Heart left ventricle (tissue), 16 donors: ENCODE measurements at regions of chr18 and their contacts with region 1.

Region 1: DNA sequence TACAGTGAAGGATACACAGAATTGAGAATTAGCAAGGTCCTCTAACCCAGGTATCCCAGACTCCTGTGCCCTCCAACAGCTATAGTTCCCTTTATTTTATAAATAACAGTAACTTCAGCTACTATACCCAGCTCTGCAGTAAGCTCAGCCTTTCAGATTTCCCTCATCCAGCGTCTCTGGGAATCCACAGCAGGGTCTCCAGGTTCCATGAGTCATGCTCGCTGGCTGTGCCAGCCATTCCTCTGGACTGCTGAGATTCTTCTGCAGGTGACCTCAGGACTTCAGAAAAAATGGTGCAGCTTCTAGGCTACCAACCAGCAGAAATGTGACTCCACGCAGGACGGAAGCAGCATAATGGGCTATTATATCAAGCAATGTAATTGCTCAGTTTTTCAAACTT is 419.3 kb downstream of the ZNF516 start:
- DNase-seq: no peak
- ATAC-seq: no peak
- H3K4me3 ChIP-seq: no peak overlapping the region
- H3K27ac ChIP-seq: no peak overlapping the region
- H3K4me1 ChIP-seq: no peaks in the 10 kb centered on the region
- H3K27me3 ChIP-seq: peaks cover 0 to 2% (median 0%) of the 10 kb centered on the region in 9 donors
- CTCF ChIP-seq: no peak
- POLR2A ChIP-seq: no peak

Region 2: DNA sequence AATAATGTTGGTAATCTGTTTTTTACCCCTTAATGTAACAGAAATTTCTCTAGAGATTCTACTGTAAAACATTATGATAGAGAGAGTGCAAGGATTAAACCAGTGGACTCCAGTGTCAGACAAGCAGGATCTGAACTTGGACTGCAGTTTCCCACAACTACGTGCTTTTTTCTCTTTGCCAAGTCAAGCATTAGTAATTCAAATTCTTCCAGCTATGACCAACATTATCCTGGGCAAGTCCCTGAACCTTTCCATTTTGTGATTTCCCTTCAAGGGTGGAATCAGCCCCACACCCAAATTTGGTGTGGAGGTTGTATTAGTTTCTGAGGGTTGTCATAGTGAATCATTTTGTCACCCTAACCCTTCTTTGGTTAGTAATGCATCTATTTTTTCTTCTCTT is 62.7 kb before region 1 on chr18:
- intact Hi-C with region 1: loop called in 1 of 10 experiments (anchors 10 kb)
- DNase-seq: no peak
- ATAC-seq: no peak
- H3K4me3 ChIP-seq: no peak overlapping the region
- H3K27ac ChIP-seq: no peak overlapping the region
- H3K4me1 ChIP-seq: no peaks in the 10 kb centered on the region
- H3K27me3 ChIP-seq: no peaks in the 10 kb centered on the region
- CTCF ChIP-seq: no peak
- POLR2A ChIP-seq: no peak

Region 3: GRCh38 chr18:76064998-76065397 is 10.8 kb before region 1 on chr18:
- intact Hi-C with region 1: no loop called
- DNase-seq: no peak
- ATAC-seq: peak in 1 of 4 donors; percentile 45
- H3K4me3 ChIP-seq: no peak overlapping the region
- H3K27ac ChIP-seq: no peak overlapping the region
- H3K4me1 ChIP-seq: no peaks in the 10 kb centered on the region
- H3K27me3 ChIP-seq: peaks cover 0 to 5% (median 0%) of the 10 kb centered on the region in 9 donors
- CTCF ChIP-seq: no peak
- POLR2A ChIP-seq: no peak

Region 4: DNA sequence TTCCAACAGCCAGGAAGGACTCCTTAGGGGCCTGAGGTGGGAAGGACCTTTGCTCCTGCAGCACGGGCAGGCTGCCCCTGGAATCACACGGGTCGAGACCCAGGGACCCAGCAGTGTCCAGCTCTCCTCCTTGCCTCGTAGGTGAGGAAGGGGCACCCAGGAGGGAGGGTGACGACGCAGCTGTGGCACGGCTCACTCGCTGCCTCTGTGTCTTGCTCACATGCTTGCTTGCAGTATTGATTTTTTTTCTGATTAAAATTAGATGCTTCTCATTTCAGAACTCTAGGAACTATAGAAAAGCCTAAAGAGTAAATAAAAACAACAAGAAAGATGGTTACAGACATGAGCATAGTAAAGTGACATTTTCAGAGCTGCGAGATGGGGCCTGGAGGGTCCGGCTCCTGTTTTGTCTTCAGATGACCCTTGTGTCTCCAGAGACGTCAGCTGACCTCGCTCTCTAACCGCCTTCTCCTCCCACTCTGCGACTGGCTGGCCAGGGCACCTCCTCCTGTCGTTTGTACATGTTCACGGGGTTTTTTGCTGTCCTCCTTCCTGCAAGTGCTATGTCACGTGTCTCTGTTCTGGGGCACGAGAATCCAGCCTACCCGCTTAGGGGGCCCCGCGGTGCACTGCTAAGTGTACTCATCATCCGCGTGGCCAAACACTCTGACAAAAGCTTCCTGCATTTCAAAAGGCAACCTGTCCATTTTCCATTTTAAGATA is 680.9 kb after region 1 on chr18:
- intact Hi-C with region 1: no loop called
- DNase-seq: no peak
- ATAC-seq: no peak
- H3K4me3 ChIP-seq: no peak overlapping the region
- H3K27ac ChIP-seq: peak overlapping the region in 1 of 12 donors; percentile 64
- H3K4me1 ChIP-seq: no peaks in the 10 kb centered on the region
- H3K27me3 ChIP-seq: peaks cover 0 to 4% (median 0%) of the 10 kb centered on the region in 9 donors
- CTCF ChIP-seq: no peak
- POLR2A ChIP-seq: no peak